ENCODE measurements at regions of chr2 and their contacts with region 1.

Region 1: DNA sequence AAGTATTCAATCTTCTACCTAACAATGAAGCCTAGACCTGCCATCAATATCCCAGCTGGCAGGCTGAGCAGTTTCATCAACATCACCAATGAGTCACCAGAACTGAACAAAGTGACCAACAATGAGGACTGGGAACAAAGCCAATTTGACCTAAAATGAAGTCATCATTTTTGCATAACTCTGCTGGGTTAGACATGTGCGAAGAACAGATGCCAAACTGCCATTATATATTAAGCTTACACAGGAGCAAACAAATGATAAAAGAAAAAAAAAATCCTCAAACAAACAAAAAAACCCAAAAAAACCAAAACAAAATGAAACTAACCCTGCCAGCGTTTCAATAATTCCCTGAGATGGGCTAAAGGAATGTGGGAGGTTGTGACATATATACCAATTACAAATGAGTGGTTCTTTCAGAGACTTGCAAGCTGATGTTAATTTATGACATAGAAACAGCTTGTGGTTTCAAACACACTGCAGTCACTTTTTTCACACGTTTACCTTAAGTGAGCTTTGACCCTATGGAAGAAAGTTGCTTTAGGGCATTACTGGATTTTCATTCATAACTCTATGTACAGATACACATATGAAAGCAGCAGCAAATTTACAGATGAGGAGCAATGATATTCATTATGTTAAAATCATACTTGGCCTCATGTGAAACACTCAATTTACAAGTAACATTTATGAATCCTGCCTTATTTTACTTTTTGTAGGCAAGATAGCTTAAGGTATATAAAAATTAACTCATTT is 56.9 kb upstream of the CCDC141 start:
- DNase-seq: peak; percentile 56
- ATAC-seq: peak; percentile 87
- H3K4me3 ChIP-seq: no peak overlapping the region
- H3K27ac ChIP-seq: no peak overlapping the region
- H3K4me1 ChIP-seq: peaks cover 14% of the 10 kb centered on the region; the same call in 1 of the 2 replicates
- H3K27me3 ChIP-seq: no peaks in the 10 kb centered on the region
- CTCF ChIP-seq: no peak
- EP300 ChIP-seq: 0 out of 4 replicates have a peak, but pooled peaks of 1 of the 2 experiments have one; percentile 44
- POLR2A ChIP-seq: no peak
- RAD21 ChIP-seq: no peak

Region 2: DNA sequence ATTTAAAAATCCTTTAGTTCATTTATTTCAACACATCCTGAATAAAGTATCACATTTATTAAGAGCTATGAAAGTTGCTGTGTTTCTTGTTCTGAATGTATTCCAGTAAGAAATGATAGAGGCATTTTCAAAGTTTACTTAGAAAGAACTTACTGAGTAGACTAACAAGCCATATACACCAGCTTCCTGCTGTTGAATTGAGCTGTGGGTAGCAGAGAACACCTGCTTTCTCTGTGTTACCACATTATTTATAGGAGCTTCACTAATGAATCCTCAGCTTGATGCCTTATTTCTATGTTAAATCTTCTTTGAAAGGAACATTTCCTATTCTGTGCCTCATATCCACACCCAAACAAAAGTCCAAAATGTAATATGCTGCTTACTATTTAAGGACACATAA is 172.3 kb before region 1 on chr2:
- CTCF ChIA-PET with region 1: no interaction called
- POLR2A ChIA-PET with region 1: no interaction called
- RAD21 ChIA-PET with region 1: no interaction called
- SMC1A ChIA-PET with region 1: no interaction called
- in situ Hi-C with region 1: no loop called
- intact Hi-C with region 1: no loop called
- DNase-seq: no peak
- ATAC-seq: no peak
- H3K4me3 ChIP-seq: no peak overlapping the region
- H3K27ac ChIP-seq: no peak overlapping the region
- H3K4me1 ChIP-seq: no peaks in the 10 kb centered on the region
- H3K27me3 ChIP-seq: no peaks in the 10 kb centered on the region
- CTCF ChIP-seq: no peak
- EP300 ChIP-seq: no peak
- POLR2A ChIP-seq: no peak
- RAD21 ChIP-seq: no peak

Region 3: GRCh38 chr2:179044500-179044899 is 62.4 kb before region 1 on chr2:
- CTCF ChIA-PET with region 1: interaction called, 11 read pairs
- POLR2A ChIA-PET with region 1: interaction called, 12 read pairs
- RAD21 ChIA-PET with region 1: interaction called, 44 read pairs
- SMC1A ChIA-PET with region 1: interaction called, 45 read pairs
- in situ Hi-C with region 1: no loop called
- intact Hi-C with region 1: no loop called
- DNase-seq: no peak
- ATAC-seq: peak; percentile 8
- H3K4me3 ChIP-seq: peak overlapping the region; percentile 25; the same call in 1 of the 2 replicates
- H3K27ac ChIP-seq: 0 out of 2 replicates have a peak overlapping the region, but pooled peaks have one; percentile 31
- H3K4me1 ChIP-seq: peaks cover 29% of the 10 kb centered on the region
- H3K27me3 ChIP-seq: no peaks in the 10 kb centered on the region
- CTCF ChIP-seq: no peak
- EP300 ChIP-seq: no peak
- POLR2A ChIP-seq: no peak
- RAD21 ChIP-seq: no peak

Region 4: DNA sequence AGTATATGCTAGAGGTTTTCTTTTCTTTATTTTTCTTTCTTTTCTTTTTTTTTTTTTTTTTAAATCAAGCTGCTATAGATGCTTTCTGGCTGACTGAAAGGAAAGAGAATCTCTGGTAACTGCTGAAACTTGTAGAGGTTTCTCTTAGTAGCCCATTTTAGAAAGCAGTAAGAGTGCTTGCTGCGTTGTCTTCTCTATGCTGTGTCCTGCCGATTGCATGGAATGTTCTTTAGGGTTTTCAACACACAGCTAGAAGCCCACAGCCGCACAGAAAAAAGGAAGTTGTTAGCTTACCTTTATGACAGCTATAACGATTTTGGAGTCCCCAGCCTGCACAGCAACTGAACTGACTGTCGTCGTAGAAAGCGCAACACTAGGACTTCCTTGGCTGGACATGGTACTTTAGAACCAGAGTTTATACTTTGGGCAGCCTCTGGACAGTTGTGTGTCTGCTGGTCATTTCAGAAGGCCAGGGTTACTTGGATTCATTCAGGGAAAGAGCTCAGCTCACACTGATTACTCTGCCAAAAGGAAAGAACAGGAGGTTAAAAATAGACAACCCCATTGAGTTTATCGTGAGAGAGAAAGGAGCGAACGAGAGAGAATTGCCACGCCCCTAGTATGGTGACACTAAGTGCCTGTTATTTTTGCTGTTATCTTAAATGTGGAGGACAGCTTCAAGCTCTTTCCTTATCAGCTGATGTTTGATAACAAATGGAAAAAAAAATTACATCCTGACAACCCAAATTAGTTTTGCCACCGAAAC is 57.1 kb before region 1 on chr2 and contains the start of gene CCDC141:
- CTCF ChIA-PET with region 1: interaction called, 11 read pairs
- POLR2A ChIA-PET with region 1: interaction called, 12 read pairs
- RAD21 ChIA-PET with region 1: interaction called, 44 read pairs
- SMC1A ChIA-PET with region 1: interaction called, 45 read pairs
- in situ Hi-C with region 1: no loop called
- intact Hi-C with region 1: no loop called
- DNase-seq: peak; percentile 37
- ATAC-seq: peak; percentile 77
- H3K4me3 ChIP-seq: peak within 1 kb of the TSS; percentile 68
- H3K27ac ChIP-seq: peak within 1 kb of the TSS; percentile 69
- H3K4me1 ChIP-seq: peaks cover 31% of the 10 kb centered on the region
- H3K27me3 ChIP-seq: no peaks in the 10 kb centered on the region
- CTCF ChIP-seq: no peak
- EP300 ChIP-seq: 0 out of 4 replicates have a peak, but pooled peaks of 1 of the 2 experiments have one; percentile 15
- POLR2A ChIP-seq: peak; percentile 35; the same call in 1 of the 2 replicates
- RAD21 ChIP-seq: no peak
- polyA plus RNA-seq, gene CCDC141: 0.84 to 2.1 TPM

Region 5: GRCh38 chr2:179059026-179059700 is 47.7 kb before region 1 on chr2:
- CTCF ChIA-PET with region 1: interaction called, 8 read pairs
- POLR2A ChIA-PET with region 1: interaction called, 7 read pairs
- RAD21 ChIA-PET with region 1: interaction called, 23 read pairs
- SMC1A ChIA-PET with region 1: interaction called, 6 read pairs
- in situ Hi-C with region 1: no loop called
- intact Hi-C with region 1: no loop called
- DNase-seq: no peak
- ATAC-seq: peak; percentile 94
- H3K4me3 ChIP-seq: no peak overlapping the region
- H3K27ac ChIP-seq: peak overlapping the region; percentile 4; the same call in 1 of the 2 replicates
- H3K4me1 ChIP-seq: peaks cover 9% of the 10 kb centered on the region
- H3K27me3 ChIP-seq: no peaks in the 10 kb centered on the region
- CTCF ChIP-seq: no peak
- EP300 ChIP-seq: no peak
- POLR2A ChIP-seq: no peak
- RAD21 ChIP-seq: no peak

Region 6: GRCh38 chr2:179096090-179096489 is 10.8 kb before region 1 on chr2:
- CTCF ChIA-PET with region 1: interaction called, 23 read pairs
- POLR2A ChIA-PET with region 1: interaction called, 22 read pairs
- RAD21 ChIA-PET with region 1: interaction called, 47 read pairs
- SMC1A ChIA-PET with region 1: interaction called, 66 read pairs
- in situ Hi-C with region 1: no loop called
- intact Hi-C with region 1: no loop called
- DNase-seq: peak; percentile 40
- ATAC-seq: peak; percentile 93
- H3K4me3 ChIP-seq: no peak overlapping the region
- H3K27ac ChIP-seq: 0 out of 2 replicates have a peak overlapping the region, but pooled peaks have one; percentile 23
- H3K4me1 ChIP-seq: peaks cover 19% of the 10 kb centered on the region
- H3K27me3 ChIP-seq: no peaks in the 10 kb centered on the region
- CTCF ChIP-seq: no peak
- EP300 ChIP-seq: peak; percentile 48 to 50; a peak in 2 of 4 replicates
- POLR2A ChIP-seq: no peak
- RAD21 ChIP-seq: no peak

Region 7: DNA sequence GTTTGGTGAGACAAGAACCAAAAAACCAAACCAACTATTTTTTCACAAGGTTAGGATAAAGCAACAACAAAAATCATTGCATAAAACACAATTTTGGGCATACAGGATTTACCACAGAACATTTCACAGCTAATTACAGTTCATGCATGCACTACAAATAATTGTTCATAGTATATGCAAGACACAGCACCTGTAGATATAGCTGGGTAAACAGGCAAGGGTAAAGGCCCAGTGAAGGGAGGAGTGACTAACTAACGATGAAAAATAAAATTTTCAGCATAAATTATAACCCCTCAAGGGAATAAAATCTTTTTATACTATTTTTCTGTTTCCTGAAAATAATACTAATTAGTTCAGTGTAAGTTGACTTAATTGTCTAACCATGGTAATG is 16.4 kb after region 1 on chr2:
- CTCF ChIA-PET with region 1: interaction called, 3 read pairs
- POLR2A ChIA-PET with region 1: interaction called, 6 read pairs
- RAD21 ChIA-PET with region 1: interaction called, 7 read pairs
- SMC1A ChIA-PET with region 1: interaction called, 40 read pairs
- in situ Hi-C with region 1: no loop called
- intact Hi-C with region 1: no loop called
- DNase-seq: no peak
- ATAC-seq: no peak
- H3K4me3 ChIP-seq: no peak overlapping the region
- H3K27ac ChIP-seq: no peak overlapping the region
- H3K4me1 ChIP-seq: no peaks in the 10 kb centered on the region
- H3K27me3 ChIP-seq: no peaks in the 10 kb centered on the region
- CTCF ChIP-seq: no peak
- EP300 ChIP-seq: no peak
- POLR2A ChIP-seq: no peak
- RAD21 ChIP-seq: no peak

Measured in GM12878 (cell line).